PC-3 (cell line): ENCODE measurements at regions of chr15 and their contacts with region 1.

Region 1: DNA sequence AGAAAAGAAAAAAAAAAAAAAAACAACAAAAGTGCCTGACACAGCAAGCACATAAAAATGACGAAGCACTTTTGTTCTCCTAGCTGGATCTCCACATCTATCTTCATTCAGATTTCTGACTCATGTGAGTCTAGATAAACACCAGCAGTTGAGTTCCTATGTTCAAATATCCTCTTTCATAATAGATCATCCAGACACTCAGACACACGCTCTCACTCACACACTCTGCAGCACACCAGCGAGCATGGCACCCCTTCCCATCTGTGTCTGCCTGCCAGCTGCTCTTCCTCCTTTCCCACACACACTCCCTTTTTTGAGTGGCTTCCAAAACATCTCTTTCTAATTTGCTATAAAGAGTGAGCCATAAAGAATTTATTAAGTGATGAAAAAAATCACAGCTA is 19.8 kb upstream of the CELF6 start:
- DNase-seq: peak; percentile 73
- ATAC-seq: peak; percentile 94
- H3K4me3 ChIP-seq: no peak overlapping the region; the same call in 1 of the 2 replicates
- H3K27ac ChIP-seq: peak overlapping the region; percentile 56
- H3K4me1 ChIP-seq: peaks cover 19% of the 10 kb centered on the region
- H3K27me3 ChIP-seq: no peaks in the 10 kb centered on the region
- CTCF ChIP-seq: no peak

Region 2: DNA sequence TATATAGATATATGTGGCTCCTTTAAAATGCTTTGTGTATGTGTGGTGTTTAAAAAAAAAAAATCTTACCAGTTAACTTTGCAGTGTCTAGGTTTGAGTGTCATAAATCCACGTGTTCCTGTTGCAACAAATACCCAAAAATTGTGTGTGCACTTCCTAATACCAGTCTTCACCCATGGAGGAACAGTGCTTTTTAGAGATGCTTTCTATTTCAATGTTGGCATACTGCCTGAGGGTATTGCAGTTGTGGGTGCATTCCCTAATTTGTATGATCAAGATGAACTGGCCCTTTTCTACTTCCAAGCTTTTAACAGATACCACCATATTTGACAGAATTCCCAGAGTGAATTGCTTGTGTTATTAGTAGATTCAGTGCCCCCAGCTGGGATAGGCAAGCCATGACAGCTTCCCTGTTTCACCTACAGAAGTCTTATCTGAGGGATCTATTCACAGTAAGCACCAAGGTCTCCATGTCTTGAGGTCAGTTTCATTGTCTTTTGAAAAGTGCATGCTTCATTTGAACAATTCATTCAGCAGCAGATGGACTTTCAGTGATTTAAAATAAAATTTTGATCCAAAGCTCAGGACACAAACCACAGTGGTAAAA is 245.8 kb after region 1 on chr15:
- CTCF ChIA-PET with region 1: no interaction called
- POLR2A ChIA-PET with region 1: no interaction called
- intact Hi-C with region 1: loop called (anchors 10 kb)
- DNase-seq: peak; percentile 13
- ATAC-seq: no peak
- H3K4me3 ChIP-seq: no peak overlapping the region
- H3K27ac ChIP-seq: no peak overlapping the region
- H3K4me1 ChIP-seq: no peaks in the 10 kb centered on the region
- H3K27me3 ChIP-seq: no peaks in the 10 kb centered on the region
- CTCF ChIP-seq: peak; percentile 52